ENCODE measurements at regions of chr10 and their contacts with region 1.

Region 1: GRCh38 chr10:4849555-4850242 is 23.7 kb downstream of the AKR1E2 start:
- ATAC-seq: peak; percentile 76 to 95 (median 90)
- H3K4me3 ChIP-seq: no peak overlapping the region
- H3K27ac ChIP-seq: no peak overlapping the region
- H3K4me1 ChIP-seq: peaks cover 3 to 4% of the 10 kb centered on the region in 2 donors

Region 2: DNA sequence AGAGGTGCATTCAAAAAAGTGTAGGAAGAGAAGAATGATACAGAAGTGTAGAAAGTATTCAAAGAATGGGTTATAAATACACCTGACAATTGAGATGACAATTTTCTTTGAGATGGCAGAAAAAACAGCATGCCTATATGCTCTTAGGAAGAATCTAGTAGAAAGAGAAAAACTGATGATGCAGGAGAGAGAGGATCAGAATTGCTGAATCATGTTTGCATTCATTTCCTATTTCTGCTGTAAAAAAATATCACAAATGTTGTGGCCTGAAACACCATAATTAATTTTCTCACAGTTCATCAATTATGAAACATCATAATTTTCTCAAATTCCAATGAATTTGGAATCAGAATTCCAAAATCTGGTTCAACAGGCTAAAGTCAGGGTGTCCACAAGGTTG is 103.7 kb after region 1 on chr10:
- in situ Hi-C with region 1: loop called in 1 of 9 experiments (anchors 25 kb)
- ATAC-seq: no peak
- H3K4me3 ChIP-seq: no peak overlapping the region
- H3K27ac ChIP-seq: no peak overlapping the region
- H3K4me1 ChIP-seq: no peaks in the 10 kb centered on the region

Region 3: DNA sequence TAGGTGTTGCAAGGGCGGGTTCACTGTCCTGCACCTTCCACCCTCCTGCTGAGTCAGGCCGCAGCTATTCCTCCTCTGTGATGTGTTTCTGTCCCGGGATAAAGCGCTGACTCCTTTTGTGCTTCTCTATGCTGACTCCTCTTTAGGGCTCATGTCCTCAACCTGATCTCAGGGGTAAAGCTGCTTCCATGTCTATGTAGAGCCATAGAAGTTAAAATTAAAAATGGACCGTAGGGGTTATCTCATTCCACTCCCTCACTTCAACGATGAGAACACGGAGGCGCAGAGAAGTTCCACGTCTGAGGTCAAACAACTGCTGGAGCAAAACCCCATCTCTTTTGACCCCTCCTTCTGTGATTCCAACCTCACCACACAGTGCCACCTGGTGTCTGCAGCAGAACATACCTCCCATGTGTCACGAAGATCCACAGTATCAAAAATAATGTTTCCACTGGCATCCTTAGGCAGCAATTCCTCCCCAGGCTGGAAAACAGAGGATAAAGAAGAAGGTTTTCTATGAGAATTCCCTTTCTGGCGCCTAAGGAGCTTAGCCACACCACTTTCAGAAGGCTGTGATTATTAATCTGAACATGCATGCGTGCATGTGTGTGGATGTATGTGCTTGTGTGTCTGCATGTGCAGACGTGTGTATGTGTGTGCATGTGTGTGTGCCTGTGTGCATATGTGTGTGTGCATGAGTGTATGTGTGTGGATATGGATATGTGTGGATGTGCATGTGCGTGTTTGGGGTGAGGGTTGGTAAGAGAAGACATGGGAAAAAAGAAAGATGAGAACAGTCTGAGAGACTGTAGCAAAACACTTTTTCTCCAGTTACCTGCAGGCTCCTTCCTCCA is 433.8 kb after region 1 on chr10:
- in situ Hi-C with region 1: loop called in 1 of 9 experiments (anchors 25 kb)
- ATAC-seq: peak in 7 of 8 experiments; percentile 45 to 96 (median 51)
- H3K4me3 ChIP-seq: no peak overlapping the region
- H3K27ac ChIP-seq: no peak overlapping the region
- H3K4me1 ChIP-seq: peaks cover 8 to 14% of the 10 kb centered on the region in 2 donors

Region 4: DNA sequence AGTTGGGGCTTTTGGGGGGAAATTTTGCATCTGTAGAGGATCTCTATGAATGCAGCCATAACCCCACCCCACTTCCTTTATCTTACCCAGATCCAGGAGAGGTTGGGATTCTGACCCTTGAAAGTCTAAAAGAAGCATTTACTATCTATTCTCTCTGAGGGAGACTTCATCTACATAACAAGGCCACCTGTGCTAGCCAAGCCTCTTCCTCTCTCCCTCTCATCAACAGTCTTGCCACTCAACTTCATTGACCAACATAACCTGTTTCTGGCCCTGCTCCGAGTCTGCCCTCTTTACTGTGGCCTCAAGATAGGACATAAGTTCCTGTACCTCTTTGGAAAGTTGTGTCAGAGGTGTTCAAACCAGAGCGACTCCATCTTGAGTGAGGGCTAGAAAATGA is 535.5 kb after region 1 on chr10:
- in situ Hi-C with region 1: loop called in 3 of 9 experiments (anchors 10 to 25 kb)
- ATAC-seq: no peak
- H3K4me3 ChIP-seq: no peak overlapping the region
- H3K27ac ChIP-seq: no peak overlapping the region
- H3K4me1 ChIP-seq: no peaks in the 10 kb centered on the region

Region 5: DNA sequence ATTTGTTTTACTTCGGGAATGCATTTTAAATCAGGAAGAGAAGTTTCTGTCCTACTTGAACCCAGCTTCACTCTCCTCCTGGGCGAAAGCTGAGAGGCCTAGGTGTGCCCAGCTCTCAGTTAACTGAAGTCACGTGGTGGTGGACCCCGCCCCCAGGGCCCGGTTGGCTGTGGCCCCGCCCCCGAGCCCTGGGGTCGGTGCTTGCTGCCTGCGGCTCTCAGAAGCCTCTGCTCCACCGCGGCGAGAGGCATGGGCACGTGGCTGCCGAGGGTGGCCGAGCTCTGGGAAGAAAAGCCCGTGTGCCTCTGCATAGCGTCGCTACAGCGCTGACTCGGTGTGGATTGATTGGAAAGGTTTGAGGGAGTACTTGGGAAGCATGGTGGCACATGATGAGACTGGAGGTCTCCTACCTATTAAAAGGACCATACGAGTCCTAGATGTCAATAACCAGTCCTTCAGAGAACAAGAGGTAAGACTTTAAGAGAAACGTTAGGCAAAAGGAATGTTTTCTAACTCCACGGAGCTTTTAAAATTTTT is 596.8 kb after region 1 on chr10:
- in situ Hi-C with region 1: loop called in 1 of 9 experiments (anchors 25 kb)
- ATAC-seq: peak; percentile 86 to 100 (median 99)
- H3K4me3 ChIP-seq: peak overlapping the region; percentile 17 to 33 (median 31)
- H3K27ac ChIP-seq: no peak overlapping the region
- H3K4me1 ChIP-seq: peaks cover 7 to 12% of the 10 kb centered on the region in 2 donors

Region 6: DNA sequence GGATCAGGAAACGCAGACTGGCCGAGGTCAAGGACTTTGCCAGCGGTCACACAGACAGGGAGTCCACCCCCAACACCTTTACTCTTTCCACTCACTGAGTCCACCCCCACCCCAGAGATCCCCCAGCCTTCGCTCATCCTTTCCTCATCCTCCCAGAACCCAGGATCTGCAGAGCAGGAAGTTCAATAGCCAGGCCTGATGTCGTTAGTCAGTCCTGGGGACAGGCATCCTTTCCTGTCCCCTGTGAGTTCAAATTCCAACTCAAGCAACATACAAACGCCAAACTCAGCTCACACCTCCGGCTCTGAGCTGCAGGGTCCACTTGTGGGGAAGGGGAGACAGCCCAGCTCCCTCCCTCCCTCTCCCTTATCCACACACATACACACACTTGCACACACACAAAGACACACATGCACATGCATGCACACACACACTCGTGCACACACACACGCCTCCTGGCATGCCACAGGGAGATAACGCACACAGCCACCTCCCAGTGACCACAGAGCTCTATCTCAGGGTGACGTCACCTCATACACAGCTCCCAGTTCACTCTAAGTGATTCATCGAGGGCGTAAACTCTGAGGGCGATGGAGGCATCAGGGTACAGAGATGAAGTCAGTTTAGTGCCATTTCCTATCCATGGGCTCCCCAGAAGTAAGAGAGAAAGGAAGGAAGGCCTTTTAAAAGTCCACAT is 699.0 kb after region 1 on chr10:
- in situ Hi-C with region 1: no loop called
- ATAC-seq: peak; percentile 71 to 99 (median 91)
- H3K4me3 ChIP-seq: no peak overlapping the region
- H3K27ac ChIP-seq: no peak overlapping the region
- H3K4me1 ChIP-seq: peaks cover 0 to 14% of the 10 kb centered on the region in 2 donors

Region 7: DNA sequence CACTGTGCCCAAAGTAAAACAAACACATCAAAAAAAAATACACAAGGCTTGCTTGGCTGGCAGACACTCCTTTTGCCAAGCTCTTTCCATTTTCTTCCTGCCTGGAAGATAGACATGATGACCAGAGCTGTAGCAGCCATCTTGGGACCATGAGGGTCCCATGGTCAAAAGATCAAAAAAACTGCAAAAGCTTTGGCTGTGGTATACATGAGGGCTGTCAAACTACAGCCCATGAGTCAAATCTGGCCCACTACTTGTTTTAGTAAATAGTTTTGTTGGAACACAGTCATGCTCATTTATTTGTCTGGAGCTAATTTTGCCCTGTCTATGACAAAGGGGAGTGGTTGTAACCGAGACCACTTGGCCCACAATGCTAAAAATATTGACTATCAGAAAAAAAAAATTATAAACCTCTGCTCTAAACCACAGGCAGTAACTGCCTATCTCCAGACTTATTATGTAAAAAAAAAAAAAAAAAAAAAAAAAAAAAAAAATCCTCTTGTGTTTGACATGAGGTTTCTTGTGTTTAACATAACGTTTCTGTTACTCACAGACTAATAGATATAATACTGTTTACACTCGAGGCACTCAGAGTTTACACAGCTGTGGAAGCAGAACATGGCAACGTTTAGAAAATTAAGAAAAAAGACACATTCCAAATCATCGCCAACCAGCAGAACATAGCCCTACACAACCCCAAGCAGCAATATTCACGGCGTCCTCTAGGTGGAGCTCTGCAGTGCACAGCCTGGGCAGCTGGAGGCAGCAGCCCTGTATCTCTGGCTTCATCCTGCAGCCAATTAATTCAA is 779.8 kb after region 1 on chr10:
- in situ Hi-C with region 1: loop called in 3 of 9 experiments (anchors 25 kb)
- ATAC-seq: peak; percentile 55 to 89 (median 67)
- H3K4me3 ChIP-seq: no peak overlapping the region
- H3K27ac ChIP-seq: no peak overlapping the region
- H3K4me1 ChIP-seq: peaks cover 5 to 16% of the 10 kb centered on the region in 2 donors